Cardiac septum (tissue), 1 donor: ENCODE measurements at regions of chr1 and their contacts with region 1.

Region 1: GRCh38 chr1:175154629-175155472 is 37.7 kb downstream of the KIAA0040 start:
- DNase-seq: peak; percentile 86

Region 2: GRCh38 chr1:175221666-175222175 is 66.9 kb after region 1 on chr1:
- intact Hi-C with region 1: loop called (anchors 5 kb)
- DNase-seq: no peak

Region 3: GRCh38 chr1:176073524-176074157 is 918.8 kb after region 1 on chr1:
- intact Hi-C with region 1: loop called (anchors 5 kb)
- DNase-seq: no peak